Panc1 (cell line): ENCODE measurements at regions of chr7 and their contacts with region 1.

Region 1: GRCh38 chr7:158228986-158229385 is 358.6 kb downstream of the PTPRN2 start:
- DNase-seq: no peak
- ATAC-seq: peak; percentile 74; the same call in 1 of the 2 replicates
- H3K4me3 ChIP-seq: no peak overlapping the region
- H3K27ac ChIP-seq: no peak overlapping the region
- H3K4me1 ChIP-seq: no peaks in the 10 kb centered on the region
- H3K27me3 ChIP-seq: peaks cover 16% of the 10 kb centered on the region
- CTCF ChIP-seq: peak; percentile 40

Region 2: DNA sequence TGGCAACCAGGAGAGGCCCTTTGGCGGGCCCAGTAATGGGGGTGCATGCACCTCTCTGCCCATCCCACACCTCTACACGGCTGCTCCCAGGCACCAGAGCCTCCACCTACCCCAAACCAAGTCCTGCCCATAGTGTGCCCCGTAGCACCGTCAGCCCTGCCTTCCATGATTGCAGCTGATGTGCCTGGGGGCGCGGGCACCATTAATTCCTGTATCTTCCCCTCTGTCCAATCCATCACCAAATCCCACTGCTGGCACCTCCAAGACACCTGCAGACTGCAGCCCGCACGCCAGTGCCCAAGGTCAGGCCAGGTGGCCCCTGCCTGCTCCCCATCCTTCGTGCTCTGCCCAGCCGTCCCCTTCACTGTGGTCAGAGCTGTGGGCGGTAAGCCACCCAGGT is 174.4 kb before region 1 on chr7:
- CTCF ChIA-PET with region 1: no interaction called
- POLR2A ChIA-PET with region 1: no interaction called
- in situ Hi-C with region 1: no loop called
- intact Hi-C with region 1: loop called (anchors 2 kb)
- DNase-seq: no peak
- ATAC-seq: no peak
- H3K4me3 ChIP-seq: no peak overlapping the region
- H3K27ac ChIP-seq: no peak overlapping the region
- H3K4me1 ChIP-seq: no peaks in the 10 kb centered on the region
- H3K27me3 ChIP-seq: peaks cover 11% of the 10 kb centered on the region
- CTCF ChIP-seq: no peak